Vagina (tissue), 2 donors: ENCODE measurements at regions of chr14 and their contacts with region 1.

Region 1: DNA sequence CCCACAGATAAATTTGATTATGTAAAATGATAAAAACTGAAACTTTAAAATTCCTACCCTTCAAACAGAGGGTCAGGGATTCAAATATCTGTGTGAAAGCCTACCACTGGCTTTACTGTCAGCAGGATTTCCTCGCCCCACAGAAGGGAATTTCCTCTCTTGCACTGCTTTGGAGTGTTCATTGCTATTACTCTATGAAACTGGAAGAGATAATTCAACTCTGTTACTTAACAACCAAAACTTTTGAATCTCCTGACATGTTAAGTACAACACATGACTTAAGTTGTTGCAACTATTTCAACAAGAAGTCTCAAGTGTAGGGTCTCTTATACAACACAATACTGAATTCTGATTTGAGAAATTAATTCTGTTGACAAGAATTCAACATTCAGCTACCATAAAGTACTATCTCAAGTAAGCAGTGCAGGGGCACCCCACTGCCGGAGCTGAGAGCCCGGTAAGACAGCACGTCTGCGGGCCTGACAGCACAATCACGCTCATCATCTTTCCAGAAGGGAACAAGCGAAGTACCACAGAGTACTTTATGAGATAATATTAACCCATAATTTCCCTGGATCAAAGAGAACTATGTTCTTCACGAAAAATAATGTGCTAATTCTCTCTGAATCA is 22.9 kb downstream of the DICER1 start:
- DNase-seq: no peak
- H3K4me3 ChIP-seq: no peak overlapping the region
- H3K27ac ChIP-seq: no peak overlapping the region
- H3K4me1 ChIP-seq: peaks cover 45% of the 10 kb centered on the region
- H3K27me3 ChIP-seq: no peaks in the 10 kb centered on the region
- CTCF ChIP-seq: no peak
- POLR2A ChIP-seq: no peak

Region 2: DNA sequence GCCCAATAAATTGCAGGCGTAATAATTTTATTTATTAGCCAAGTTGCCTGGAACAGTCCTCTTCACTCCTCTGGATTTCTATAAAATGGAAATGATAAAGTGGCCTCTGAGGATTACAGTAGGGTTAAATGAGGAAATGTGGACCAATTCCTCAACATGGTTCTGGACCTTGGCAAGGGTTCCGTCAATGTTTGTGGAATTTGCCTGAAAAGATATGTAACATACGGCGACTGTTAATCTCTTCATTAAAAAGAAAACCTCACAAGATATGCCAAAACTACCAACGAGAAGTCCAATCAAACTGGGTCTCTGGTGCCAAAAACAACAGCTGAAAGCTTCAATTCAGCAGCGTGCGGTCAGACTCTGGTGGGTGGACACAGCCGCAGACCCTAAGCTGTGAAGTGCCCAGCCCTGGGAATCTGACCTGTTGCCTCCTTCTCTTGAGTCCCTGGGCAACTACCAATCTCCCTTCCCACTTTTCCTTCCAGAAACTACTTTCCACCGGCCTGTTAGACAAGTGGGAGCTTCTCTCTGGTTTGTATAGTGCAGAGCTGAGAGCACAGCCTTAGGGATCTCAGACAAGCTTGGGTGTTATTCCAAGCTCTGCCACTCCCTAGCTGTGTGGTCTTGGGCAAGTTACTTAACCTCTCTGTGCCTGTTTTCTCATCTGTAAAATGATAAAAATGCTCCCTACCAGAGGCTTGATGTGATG is 174.0 kb before region 1 on chr14:
- intact Hi-C with region 1: no loop called
- DNase-seq: peak in 1 of 2 donors; percentile 34
- H3K4me3 ChIP-seq: no peak overlapping the region
- H3K27ac ChIP-seq: no peak overlapping the region
- H3K4me1 ChIP-seq: no peaks in the 10 kb centered on the region
- H3K27me3 ChIP-seq: no peaks in the 10 kb centered on the region
- CTCF ChIP-seq: no peak
- POLR2A ChIP-seq: no peak

Region 3: GRCh38 chr14:95034788-95035187 is 99.6 kb before region 1 on chr14:
- intact Hi-C with region 1: loop called (anchors 5 kb)
- DNase-seq: peak; percentile 60 to 79
- H3K4me3 ChIP-seq: no peak overlapping the region
- H3K27ac ChIP-seq: no peak overlapping the region
- H3K4me1 ChIP-seq: peaks cover under 1% of the 10 kb centered on the region
- H3K27me3 ChIP-seq: no peaks in the 10 kb centered on the region
- CTCF ChIP-seq: no peak
- POLR2A ChIP-seq: no peak

Region 4: DNA sequence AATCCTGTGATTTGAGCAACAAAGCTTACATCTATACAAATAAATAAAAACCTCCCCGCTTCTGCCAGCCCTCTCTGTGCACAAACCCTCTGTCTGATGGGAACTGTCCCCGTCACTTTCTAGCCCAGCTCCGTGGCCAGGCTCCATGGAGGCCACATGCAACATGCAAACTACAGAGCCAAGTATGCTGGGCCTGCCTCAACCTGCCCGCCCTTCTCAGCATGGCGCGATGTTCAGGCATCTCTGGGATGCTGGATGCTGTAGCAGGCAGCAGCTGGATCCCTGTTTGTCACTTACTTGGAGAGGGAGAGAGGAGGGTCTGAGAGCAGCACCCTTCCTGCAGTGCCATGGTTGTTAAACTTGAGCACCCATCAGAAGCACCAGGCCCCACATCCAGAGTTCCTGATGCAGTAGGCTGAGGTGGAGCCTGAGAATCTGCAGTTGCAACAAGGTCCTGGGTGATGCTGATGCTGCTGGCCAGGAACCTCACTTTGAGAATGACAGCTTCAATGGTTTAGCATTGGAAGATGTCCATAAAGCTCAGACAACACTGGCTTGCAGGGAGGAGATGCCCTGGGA is 152.8 kb after region 1 on chr14:
- intact Hi-C with region 1: no loop called
- DNase-seq: peak in 1 of 2 donors; percentile 89
- H3K4me3 ChIP-seq: no peak overlapping the region
- H3K27ac ChIP-seq: no peak overlapping the region
- H3K4me1 ChIP-seq: peaks cover 14% of the 10 kb centered on the region
- H3K27me3 ChIP-seq: no peaks in the 10 kb centered on the region
- CTCF ChIP-seq: no peak
- POLR2A ChIP-seq: no peak